Activated naive CD4-positive, alpha-beta T cell treated with anti-CD3 and anti-CD28 coated beads for 36 hours (primary cell): ENCODE measurements at regions of chr4 and their contacts with region 1.

Region 1: DNA sequence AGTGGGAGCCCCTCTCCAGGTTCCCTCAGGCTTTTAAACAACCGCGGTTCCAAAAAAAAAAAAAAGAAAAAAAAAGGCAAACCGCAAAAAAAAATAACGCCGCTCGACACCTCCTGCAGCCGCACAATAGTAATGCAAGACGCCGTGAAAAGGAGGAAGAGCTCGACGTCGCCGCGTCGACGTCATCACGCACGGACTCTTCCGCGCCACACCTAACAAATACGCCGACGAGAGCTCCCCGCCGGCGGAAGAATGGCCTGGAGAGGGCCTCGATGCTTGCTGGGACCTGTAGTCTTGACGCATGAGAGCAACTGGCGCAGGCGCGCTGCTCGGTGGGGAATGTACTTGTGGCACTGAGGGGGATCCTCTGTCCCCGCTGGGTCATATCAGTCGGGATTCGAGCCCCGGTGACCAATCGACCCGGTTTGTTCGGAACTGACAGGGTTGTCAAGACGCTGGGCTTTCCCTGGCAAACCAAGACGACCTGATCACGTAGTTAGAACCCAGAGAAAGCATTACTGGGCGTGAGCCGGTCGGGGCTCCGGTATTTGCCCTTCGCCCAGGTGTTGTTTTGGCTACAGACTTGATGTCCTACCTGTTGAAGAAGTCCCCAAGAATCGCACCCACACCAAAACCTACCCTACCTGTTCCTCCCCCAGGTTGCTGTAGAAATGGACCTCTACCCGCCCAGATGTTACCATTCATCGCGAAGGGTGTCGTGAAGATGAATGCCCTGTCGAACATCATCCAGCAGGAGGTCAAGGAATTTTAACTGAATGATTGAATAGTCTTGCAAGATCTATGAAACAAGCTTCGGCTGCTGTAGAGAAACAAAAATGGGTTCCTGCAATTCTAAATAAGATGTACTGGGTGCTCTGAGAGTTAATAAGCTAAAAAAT is at the start of gene CBR4:
- DNase-seq: peak; percentile 97
- H3K4me3 Mint-ChIP-seq: peak within 1 kb of the TSS; percentile 75
- H3K27ac Mint-ChIP-seq: peak within 1 kb of the TSS; percentile 86
- H3K4me1 Mint-ChIP-seq: peaks cover 15% of the 10 kb centered on the region
- H3K27me3 Mint-ChIP-seq: no peaks in the 10 kb centered on the region
- total RNA-seq, gene CBR4: 22.9 to 24.3 TPM

Region 2: GRCh38 chr4:168318266-168318895 is 692.0 kb before region 1 on chr4 and contains the start of gene DDX60:
- CTCF ChIA-PET with region 1: no interaction called
- intact Hi-C with region 1: loop called (anchors 2 kb)
- DNase-seq: peak; percentile 90
- H3K4me3 Mint-ChIP-seq: peak within 1 kb of the TSS; percentile 85
- H3K27ac Mint-ChIP-seq: peak within 1 kb of the TSS; percentile 89
- H3K4me1 Mint-ChIP-seq: peaks cover 31% of the 10 kb centered on the region
- H3K27me3 Mint-ChIP-seq: no peaks in the 10 kb centered on the region
- total RNA-seq, gene DDX60: 26.8 to 28.2 TPM

Region 3: GRCh38 chr4:168585168-168586091 is 424.9 kb before region 1 on chr4:
- CTCF ChIA-PET with region 1: no interaction called
- intact Hi-C with region 1: loop called (anchors 10 kb)
- DNase-seq: peak; percentile 53
- H3K4me3 Mint-ChIP-seq: no peak overlapping the region
- H3K27ac Mint-ChIP-seq: no peak overlapping the region
- H3K4me1 Mint-ChIP-seq: peaks cover 2% of the 10 kb centered on the region
- H3K27me3 Mint-ChIP-seq: peaks cover 17% of the 10 kb centered on the region

Region 4: GRCh38 chr4:168995537-168996295 is 14.7 kb before region 1 on chr4:
- CTCF ChIA-PET with region 1: interaction called, 14 read pairs
- intact Hi-C with region 1: no loop called
- DNase-seq: no peak
- H3K4me3 Mint-ChIP-seq: no peak overlapping the region
- H3K27ac Mint-ChIP-seq: no peak overlapping the region
- H3K4me1 Mint-ChIP-seq: no peaks in the 10 kb centered on the region
- H3K27me3 Mint-ChIP-seq: no peaks in the 10 kb centered on the region

Region 5: DNA sequence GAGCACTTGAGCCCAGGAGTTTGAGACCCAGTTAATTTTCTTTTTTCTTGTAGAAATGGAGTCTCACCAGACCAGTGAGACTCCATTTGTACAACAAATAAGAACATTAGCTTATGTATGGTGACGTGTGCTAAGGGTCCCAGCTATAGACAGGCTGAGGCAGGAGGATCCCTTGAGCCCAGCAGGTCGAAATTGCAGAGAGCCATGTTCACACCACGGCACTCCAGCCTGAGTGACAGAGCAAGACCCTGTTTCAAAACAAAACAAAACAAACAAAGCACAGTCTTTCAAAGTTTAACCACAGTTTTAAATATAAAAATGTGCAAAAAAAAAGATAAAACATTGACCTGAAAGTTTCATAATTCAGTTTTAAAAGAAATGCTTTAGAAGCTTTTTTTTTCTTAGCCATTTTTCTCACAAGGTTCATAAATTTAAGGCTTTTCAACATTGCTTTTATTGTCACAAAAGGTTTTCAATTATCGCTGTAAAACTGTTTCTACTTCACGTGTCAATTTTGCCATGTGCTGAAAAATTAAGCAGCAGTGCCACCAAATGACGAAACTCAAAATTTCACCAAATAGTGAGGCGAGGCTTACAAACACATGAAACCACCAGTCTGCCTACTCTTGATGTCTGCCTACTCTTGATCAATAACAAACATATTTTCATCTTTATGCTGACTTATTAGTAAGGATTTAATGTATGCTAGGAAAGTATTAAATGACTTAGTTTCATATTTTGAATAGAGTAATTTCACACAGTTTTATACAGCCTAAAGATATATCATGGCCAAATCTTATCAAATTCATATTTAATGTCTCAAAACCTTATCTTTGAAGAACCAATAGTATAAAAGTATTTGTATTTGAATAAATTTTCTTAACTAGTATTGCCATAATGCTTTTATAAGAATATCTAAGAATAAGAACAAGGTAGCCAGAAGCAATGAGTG is 475.7 kb after region 1 on chr4:
- CTCF ChIA-PET with region 1: interaction called, 5 read pairs
- intact Hi-C with region 1: loop called (anchors 1 kb)
- DNase-seq: peak; percentile 66
- H3K4me3 Mint-ChIP-seq: no peak overlapping the region
- H3K27ac Mint-ChIP-seq: no peak overlapping the region
- H3K4me1 Mint-ChIP-seq: no peaks in the 10 kb centered on the region
- H3K27me3 Mint-ChIP-seq: no peaks in the 10 kb centered on the region

Region 6: DNA sequence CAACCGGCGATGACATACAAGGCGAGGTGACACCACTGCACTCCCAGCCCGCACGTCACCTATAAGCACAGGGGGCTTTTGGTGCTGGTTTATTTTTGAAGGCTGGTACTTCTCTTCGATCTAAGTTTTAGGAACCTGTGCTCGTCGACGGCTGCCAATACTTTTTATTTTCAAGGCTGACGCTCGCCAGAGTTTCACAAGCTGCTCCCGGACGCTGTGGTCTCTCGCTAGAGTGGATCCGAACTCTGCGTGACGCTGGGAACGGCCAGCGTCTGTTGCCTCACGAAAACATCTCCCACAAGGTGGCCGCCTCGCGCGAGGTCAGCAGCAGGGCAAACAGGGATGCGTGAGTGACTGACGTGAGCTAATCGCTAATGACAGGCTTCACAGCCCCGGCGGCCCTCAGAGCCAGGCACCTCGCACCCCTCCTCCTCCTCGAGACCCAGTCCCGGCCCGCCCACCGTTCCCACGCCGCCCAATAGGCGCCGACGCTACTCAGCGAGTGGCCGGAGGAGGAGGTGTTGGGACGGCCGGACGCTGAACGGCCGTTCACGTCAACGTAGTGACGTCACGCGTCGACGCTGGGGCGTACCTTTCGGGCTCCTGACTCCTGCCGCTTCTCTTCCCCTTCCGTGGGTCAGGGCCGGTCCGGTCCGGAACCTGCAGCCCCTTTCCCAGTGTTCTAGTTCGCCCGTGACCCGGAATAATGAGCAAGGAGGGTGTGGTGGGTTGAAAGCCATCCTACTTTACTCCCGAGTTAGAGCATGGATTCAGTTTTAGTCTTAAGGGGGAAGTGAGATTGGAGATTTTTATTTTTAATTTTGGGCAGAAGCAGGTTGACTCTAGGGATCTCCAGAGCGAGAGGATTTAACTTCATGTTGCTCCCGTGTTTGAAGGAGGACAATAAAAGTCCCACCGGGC is 609.8 kb after region 1 on chr4 and contains the start of gene CLCN3:
- CTCF ChIA-PET with region 1: no interaction called
- intact Hi-C with region 1: loop called (anchors 2 kb)
- DNase-seq: peak; percentile 90
- H3K4me3 Mint-ChIP-seq: peak within 1 kb of the TSS; percentile 93
- H3K27ac Mint-ChIP-seq: peak within 1 kb of the TSS; percentile 96
- H3K4me1 Mint-ChIP-seq: peaks cover 59% of the 10 kb centered on the region
- H3K27me3 Mint-ChIP-seq: no peaks in the 10 kb centered on the region
- total RNA-seq, gene CLCN3: 17.4 to 18.4 TPM

Region 7: DNA sequence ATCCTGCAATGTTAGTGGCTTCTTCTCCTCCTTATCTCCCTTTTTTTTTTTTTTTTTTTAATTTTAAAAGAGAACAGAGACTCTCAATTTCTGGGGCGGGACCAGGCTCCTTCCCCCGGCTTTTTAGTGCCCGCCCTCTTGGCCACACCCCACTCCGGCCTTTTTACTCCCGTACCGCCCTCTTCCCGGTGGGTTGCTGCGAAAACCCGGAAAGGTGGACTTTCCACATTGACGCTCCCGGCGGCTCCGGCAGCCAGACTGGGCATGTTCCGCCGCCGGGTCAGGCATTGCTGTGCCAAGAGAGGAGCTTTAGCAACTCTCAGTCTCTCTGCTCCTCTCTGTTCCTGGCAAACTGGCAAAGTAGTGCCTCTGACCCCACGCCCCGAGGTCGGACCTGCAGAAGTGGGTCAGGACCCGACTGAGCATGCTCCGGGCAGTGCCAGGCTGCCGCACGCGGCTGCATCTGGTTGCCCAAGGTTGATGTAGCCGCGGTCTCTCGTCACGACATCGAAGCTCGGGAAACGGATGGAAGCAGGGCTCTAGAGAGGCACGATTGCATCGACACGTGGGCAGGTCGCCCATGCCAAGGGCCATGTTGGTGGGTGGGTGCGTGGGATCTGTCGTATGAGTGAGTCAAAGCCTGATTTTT is 1016.9 kb after region 1 on chr4:
- CTCF ChIA-PET with region 1: no interaction called
- intact Hi-C with region 1: loop called (anchors 1 kb)
- DNase-seq: peak; percentile 93
- H3K4me3 Mint-ChIP-seq: peak overlapping the region; percentile 83
- H3K27ac Mint-ChIP-seq: peak overlapping the region; percentile 38
- H3K4me1 Mint-ChIP-seq: peaks cover 7% of the 10 kb centered on the region
- H3K27me3 Mint-ChIP-seq: peaks cover 15% of the 10 kb centered on the region